ENCODE measurements at regions of chr17 and their contacts with region 1.

Region 1: DNA sequence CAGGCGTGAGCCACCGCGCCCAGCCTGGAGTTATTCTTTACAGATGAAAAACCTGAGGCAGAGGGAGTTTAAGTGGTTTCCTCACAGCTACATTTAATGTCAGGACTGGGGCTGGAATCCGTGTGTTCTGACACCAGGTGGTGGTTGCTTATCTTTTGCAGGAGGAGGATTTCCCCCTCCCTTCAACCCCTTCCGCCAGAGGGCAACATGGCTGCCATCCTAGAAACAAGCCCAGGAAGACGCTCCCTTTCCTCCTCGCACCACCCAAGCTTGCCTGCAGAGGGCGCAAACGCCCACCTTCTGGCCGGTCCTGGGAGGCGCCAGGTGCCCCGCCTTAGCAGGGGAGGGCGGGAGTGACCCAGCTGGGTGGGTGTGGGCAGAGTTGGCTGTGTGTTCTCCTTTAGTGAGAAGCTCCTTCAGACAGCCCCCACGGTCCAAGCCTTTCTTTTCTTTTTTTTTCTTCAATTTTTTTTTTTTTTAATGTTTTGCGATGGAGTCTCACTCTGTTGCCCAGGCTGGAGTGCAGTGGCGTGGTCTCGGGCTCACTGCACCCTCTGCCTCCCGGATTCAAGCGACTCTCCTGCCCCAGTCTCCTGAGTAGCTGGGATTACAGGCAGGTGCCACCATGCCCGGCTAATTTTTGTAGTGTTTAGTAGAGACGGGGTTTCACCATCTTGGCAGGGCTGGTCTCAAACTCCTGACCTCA is 9.9 kb upstream of the RAP1GAP2 start:
- DNase-seq: peak; percentile 90 to 91 (median 90)
- H3K4me3 ChIP-seq: peak overlapping the region in 1 of 3 experiments; percentile 51
- H3K4me3 Mint-ChIP-seq: peak overlapping the region; percentile 60 to 67
- H3K27ac ChIP-seq: no peak overlapping the region
- H3K27ac Mint-ChIP-seq: peak overlapping the region in 5 of 7 donors; percentile 6 to 78 (median 32)
- H3K4me1 ChIP-seq: peaks cover 36 to 45% of the 10 kb centered on the region in 2 donors
- H3K4me1 Mint-ChIP-seq: peaks cover 40% of the 10 kb centered on the region
- H3K27me3 ChIP-seq: no peaks in the 10 kb centered on the region
- H3K27me3 Mint-ChIP-seq: peaks cover 0 to 5% (median 2%) of the 10 kb centered on the region in 3 donors
- CTCF ChIP-seq: peak; percentile 93

Region 2: DNA sequence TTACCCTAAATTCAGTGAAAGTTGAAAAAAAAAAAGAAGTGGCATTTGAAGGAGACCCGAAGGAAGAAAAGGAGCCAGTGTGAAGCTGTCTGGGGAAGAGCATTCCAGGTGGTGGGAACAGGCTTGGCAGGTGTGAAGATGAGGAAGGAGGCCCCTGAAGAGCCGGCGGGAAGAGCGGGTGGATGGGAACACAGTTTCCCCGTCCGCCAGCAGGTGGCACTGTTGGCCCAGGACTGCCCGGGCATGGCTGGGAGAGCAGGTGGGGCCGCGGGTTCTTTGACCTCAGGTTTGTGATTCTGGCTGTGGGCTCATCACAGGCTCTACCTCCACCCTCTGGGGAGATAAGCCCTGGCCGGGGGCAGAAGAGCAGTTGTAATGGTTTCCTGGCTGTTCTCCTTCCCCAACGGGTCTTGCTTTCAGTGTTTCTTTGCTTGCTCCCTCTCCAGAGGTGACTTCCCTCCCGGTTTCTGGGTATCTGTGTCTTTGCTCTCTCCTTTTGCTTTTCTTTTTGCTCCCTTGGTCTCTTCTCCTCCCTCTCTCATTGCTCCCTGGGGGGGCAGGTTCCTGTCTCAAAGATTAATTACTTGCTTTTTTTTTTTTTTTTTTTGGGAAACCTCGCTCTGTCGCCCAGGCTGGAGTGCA is 42.2 kb after region 1 on chr17:
- intact Hi-C with region 1: loop called in 1 of 2 experiments (anchors 5 kb)
- DNase-seq: peak; percentile 42 to 60 (median 59)
- H3K4me3 ChIP-seq: no peak overlapping the region
- H3K4me3 Mint-ChIP-seq: no peak overlapping the region
- H3K27ac ChIP-seq: no peak overlapping the region
- H3K27ac Mint-ChIP-seq: peak overlapping the region in 3 of 7 donors; percentile 44 to 66 (median 47)
- H3K4me1 ChIP-seq: peaks cover 13 to 28% of the 10 kb centered on the region in 2 donors
- H3K4me1 Mint-ChIP-seq: peaks cover 36% of the 10 kb centered on the region
- H3K27me3 ChIP-seq: no peaks in the 10 kb centered on the region
- H3K27me3 Mint-ChIP-seq: peaks cover 0 to under 1% (median 0%) of the 10 kb centered on the region in 3 donors
- CTCF ChIP-seq: peak; percentile 90

Region 3: DNA sequence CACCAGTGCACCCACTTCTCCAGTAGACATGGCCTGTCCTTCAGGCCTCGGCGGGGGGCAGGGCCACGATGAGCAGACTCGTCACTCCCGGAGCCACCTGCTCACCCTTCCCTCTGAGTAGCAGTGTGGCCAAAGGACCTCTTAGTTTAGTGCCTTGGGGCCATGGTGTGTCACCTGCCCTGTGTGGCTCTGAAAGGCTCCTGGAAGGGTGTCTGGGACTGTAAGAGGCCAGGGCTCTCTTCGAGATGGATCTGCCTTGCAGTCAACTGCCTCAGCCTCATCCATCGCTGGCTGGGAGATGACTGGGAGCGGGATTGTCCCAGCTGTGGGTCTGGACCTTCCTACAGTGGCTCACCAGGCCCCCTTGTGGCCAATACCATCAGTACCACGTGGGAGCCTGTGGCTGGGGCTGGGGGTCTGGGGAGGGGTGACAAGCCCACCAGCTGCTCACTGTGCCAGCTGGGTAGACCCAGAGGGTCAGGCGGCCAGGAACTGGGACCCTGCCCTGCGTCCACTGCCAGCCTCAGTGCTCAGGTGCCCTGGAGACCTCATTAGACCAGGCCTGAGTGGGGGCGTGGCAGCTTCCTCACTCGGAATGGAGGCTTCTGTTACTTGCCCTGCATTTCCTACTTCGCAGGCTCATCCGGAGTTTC is 143.7 kb after region 1 on chr17:
- intact Hi-C with region 1: loop called in 1 of 2 experiments (anchors 10 kb)
- DNase-seq: no peak
- H3K4me3 ChIP-seq: no peak overlapping the region
- H3K4me3 Mint-ChIP-seq: no peak overlapping the region
- H3K27ac ChIP-seq: no peak overlapping the region
- H3K27ac Mint-ChIP-seq: peak overlapping the region in 1 of 7 donors; percentile 30
- H3K4me1 ChIP-seq: peaks cover 0 to 4% of the 10 kb centered on the region in 2 donors
- H3K4me1 Mint-ChIP-seq: peaks cover 30% of the 10 kb centered on the region
- H3K27me3 ChIP-seq: no peaks in the 10 kb centered on the region
- H3K27me3 Mint-ChIP-seq: peaks cover under 1 to 3% (median 2%) of the 10 kb centered on the region in 3 donors
- CTCF ChIP-seq: peak; percentile 78

Region 4: GRCh38 chr17:3004133-3004801 is 217.9 kb after region 1 on chr17:
- intact Hi-C with region 1: loop called (anchors 5 to 10 kb)
- DNase-seq: peak; percentile 95 to 97 (median 96)
- H3K4me3 ChIP-seq: peak overlapping the region in 2 of 3 experiments; percentile 10 to 53
- H3K4me3 Mint-ChIP-seq: peak overlapping the region; percentile 74 to 78
- H3K27ac ChIP-seq: peak overlapping the region; percentile 73 to 78
- H3K27ac Mint-ChIP-seq: peak overlapping the region; percentile 93 to 98 (median 97)
- H3K4me1 ChIP-seq: peaks cover 38% of the 10 kb centered on the region in 2 donors
- H3K4me1 Mint-ChIP-seq: peaks cover 40% of the 10 kb centered on the region
- H3K27me3 ChIP-seq: no peaks in the 10 kb centered on the region
- H3K27me3 Mint-ChIP-seq: peaks cover 0 to 2% (median 0%) of the 10 kb centered on the region in 3 donors
- CTCF ChIP-seq: no peak